Breast epithelium (tissue), 4 donors: ENCODE measurements at regions of chr2 and their contacts with region 1.

Region 1: GRCh38 chr2:3533836-3534235 is 14.5 kb upstream of the ADI1 start:
- DNase-seq: no peak
- H3K4me3 ChIP-seq: no peak overlapping the region
- H3K27ac ChIP-seq: no peak overlapping the region
- H3K4me1 ChIP-seq: no peaks in the 10 kb centered on the region
- H3K27me3 ChIP-seq: no peaks in the 10 kb centered on the region
- CTCF ChIP-seq: no peak
- POLR2A ChIP-seq: no peak

Region 2: GRCh38 chr2:2050446-2050845 is 1483.4 kb before region 1 on chr2:
- intact Hi-C with region 1: no loop called
- DNase-seq: no peak
- H3K4me3 ChIP-seq: no peak overlapping the region
- H3K27ac ChIP-seq: no peak overlapping the region
- H3K4me1 ChIP-seq: no peaks in the 10 kb centered on the region
- H3K27me3 ChIP-seq: no peaks in the 10 kb centered on the region
- CTCF ChIP-seq: no peak
- POLR2A ChIP-seq: no peak

Region 3: DNA sequence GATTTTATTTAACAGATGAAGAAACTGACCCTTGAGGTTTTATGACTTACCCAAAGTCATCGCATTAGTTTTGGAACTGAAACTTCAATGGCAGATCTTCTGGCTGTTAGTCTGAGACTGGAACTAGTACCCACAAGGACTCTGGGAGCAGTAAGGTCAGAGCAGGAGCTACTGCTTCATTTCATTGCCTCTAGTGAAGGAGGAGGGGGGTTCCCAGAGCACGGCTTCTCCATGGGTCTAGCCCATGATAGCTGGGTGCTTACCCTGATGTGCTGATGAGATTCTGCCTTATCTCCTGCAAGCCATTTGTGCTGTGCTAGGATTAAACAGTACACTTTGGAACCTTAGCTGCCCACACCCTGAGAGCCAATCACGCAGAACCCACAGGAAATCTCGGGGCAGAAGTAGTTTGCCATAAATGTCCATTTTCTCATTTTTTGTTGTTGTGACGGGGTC is 29.7 kb after region 1 on chr2:
- intact Hi-C with region 1: loop called (anchors 1 kb)
- DNase-seq: no peak
- H3K4me3 ChIP-seq: no peak overlapping the region
- H3K27ac ChIP-seq: no peak overlapping the region
- H3K4me1 ChIP-seq: no peaks in the 10 kb centered on the region
- H3K27me3 ChIP-seq: no peaks in the 10 kb centered on the region
- CTCF ChIP-seq: no peak
- POLR2A ChIP-seq: no peak